ENCODE measurements at regions of chr7 and their contacts with region 1.

Region 1: GRCh38 chr7:33185786-33186185 is 56.4 kb downstream of the BBS9 start:
- DNase-seq: peak; percentile 52
- H3K4me3 ChIP-seq: no peak overlapping the region
- H3K27ac ChIP-seq: no peak overlapping the region
- H3K4me1 ChIP-seq: no peaks in the 10 kb centered on the region
- CTCF ChIP-seq: peak; percentile 92

Region 2: GRCh38 chr7:33334349-33334748 is 148.6 kb after region 1 on chr7:
- CTCF ChIA-PET with region 1: no interaction called
- POLR2A ChIA-PET with region 1: no interaction called
- intact Hi-C with region 1: loop called (anchors 5 kb)
- DNase-seq: peak; percentile 2
- H3K4me3 ChIP-seq: no peak overlapping the region
- H3K27ac ChIP-seq: no peak overlapping the region
- H3K4me1 ChIP-seq: no peaks in the 10 kb centered on the region
- CTCF ChIP-seq: peak; percentile 62

Region 3: GRCh38 chr7:33744293-33745075 is 558.7 kb after region 1 on chr7:
- CTCF ChIA-PET with region 1: no interaction called
- POLR2A ChIA-PET with region 1: no interaction called
- intact Hi-C with region 1: loop called (anchors 2 kb)
- DNase-seq: peak; percentile 69
- H3K4me3 ChIP-seq: no peak overlapping the region
- H3K27ac ChIP-seq: no peak overlapping the region
- H3K4me1 ChIP-seq: no peaks in the 10 kb centered on the region
- CTCF ChIP-seq: peak; percentile 81